ENCODE measurements at regions of chr2 and their contacts with region 1.

Region 1: GRCh38 chr2:25131567-25132298 is 36.6 kb downstream of the POMC start:
- DNase-seq: peak in 2 of 3 donors; percentile 34 to 39
- H3K4me3 ChIP-seq: peak overlapping the region in 6 of 7 experiments; percentile 28 to 72 (median 40)
- H3K27ac ChIP-seq: no peak overlapping the region
- H3K4me1 ChIP-seq: peaks cover 0 to 16% (median 13%) of the 10 kb centered on the region in 4 experiments
- H3K27me3 ChIP-seq: peaks cover 2 to 58% (median 25%) of the 10 kb centered on the region in 5 experiments

Region 2: GRCh38 chr2:24863641-24864040 is 268.1 kb before region 1 on chr2:
- CTCF ChIA-PET with region 1: no interaction called
- POLR2A ChIA-PET with region 1: no interaction called
- DNase-seq: no peak
- H3K4me3 ChIP-seq: no peak overlapping the region
- H3K27ac ChIP-seq: no peak overlapping the region
- H3K4me1 ChIP-seq: peaks cover 0 to 12% (median 2%) of the 10 kb centered on the region in 4 experiments
- H3K27me3 ChIP-seq: no peaks in the 10 kb centered on the region

Region 3: DNA sequence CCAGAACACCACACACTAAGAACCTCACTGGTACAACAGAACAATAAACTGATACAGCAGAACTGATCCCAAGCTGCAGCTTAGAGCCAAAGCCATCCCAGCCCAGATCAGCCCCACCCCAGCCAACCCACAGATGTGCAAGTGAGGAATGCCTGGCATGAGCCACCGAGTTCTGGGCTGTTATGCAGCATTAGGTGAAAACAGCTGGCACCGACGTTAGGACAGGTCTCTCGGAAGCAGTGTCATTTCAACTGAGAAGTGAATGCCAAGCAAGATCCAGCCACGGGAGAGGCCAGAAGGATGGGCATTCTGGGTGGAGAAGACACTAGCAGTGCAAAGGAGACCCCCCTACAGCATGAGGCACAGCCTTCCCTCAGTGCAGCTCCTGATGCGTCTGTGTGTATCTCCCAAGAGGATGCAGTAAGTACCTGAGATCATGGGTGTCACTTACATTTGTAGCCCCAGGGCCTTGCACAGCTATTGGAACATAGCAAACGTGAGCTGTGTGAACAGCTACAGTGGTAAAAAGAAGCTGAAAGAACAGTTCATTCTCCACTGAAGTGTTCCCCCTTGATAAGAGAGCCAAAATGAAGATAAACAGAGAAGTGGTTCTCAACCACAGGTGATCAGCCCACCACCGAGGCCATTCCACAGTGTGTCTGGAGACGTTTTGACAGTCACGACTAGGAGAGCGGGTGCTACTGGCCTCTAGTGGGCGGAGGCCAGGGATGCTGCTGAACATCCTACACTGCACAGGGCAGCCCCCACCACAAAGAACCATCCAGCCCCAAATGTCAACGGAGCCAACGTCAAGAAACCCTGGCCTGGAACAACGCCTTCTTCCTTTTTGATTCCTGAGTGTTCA is 250.3 kb before region 1 on chr2:
- CTCF ChIA-PET with region 1: no interaction called
- POLR2A ChIA-PET with region 1: no interaction called
- DNase-seq: no peak
- H3K4me3 ChIP-seq: no peak overlapping the region
- H3K27ac ChIP-seq: no peak overlapping the region
- H3K4me1 ChIP-seq: peaks cover 3 to 44% (median 38%) of the 10 kb centered on the region in 4 experiments
- H3K27me3 ChIP-seq: no peaks in the 10 kb centered on the region

Region 4: DNA sequence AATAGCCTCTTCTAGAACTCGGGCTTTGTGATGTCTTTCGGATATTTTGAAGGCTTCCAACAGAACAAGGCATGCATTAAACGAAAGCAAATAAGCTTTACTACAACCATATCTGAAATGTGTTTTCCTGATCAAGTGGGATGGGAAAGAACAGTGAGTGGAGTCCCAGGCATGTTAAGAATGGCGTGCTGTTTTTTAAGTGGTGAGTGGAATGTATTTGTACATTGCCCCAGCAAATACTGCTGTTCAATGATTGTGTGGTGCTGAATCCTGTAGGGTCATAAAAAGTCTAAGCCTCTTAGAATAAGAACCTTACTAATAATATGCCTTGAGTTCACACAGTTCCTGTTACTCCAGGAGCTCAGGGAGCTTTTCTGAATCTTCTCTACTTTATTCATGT is 15.8 kb before region 1 on chr2:
- CTCF ChIA-PET with region 1: interaction called, 13 read pairs
- POLR2A ChIA-PET with region 1: no interaction called
- DNase-seq: peak in 1 of 3 donors; percentile 26
- H3K4me3 ChIP-seq: no peak overlapping the region
- H3K27ac ChIP-seq: no peak overlapping the region
- H3K4me1 ChIP-seq: peaks cover 0 to 3% (median 0%) of the 10 kb centered on the region in 4 experiments
- H3K27me3 ChIP-seq: no peaks in the 10 kb centered on the region

Region 5: DNA sequence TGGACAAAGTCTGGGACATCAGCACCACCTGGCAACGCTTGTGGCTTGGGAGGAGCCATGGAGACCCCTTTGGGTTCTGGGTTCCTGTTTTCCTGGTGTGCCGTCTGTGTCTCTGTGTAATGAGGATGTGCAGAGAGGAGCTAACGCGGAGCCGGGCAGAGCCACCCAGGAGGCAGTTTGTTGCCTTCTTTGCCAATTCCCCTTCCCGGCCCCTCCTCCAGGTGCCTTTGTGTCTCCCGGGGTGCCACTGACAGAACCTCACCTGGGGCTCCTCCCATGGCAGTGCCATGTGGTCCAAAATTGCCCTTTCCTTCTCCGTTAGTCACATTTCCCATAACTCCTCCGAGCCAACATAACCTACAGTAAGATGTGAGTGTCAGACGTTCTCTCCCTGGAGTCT is 23.7 kb after region 1 on chr2:
- CTCF ChIA-PET with region 1: no interaction called
- POLR2A ChIA-PET with region 1: no interaction called
- DNase-seq: no peak
- H3K4me3 ChIP-seq: no peak overlapping the region
- H3K27ac ChIP-seq: no peak overlapping the region
- H3K4me1 ChIP-seq: peaks cover 0 to under 1% (median 0%) of the 10 kb centered on the region in 4 experiments
- H3K27me3 ChIP-seq: peaks cover 0 to 4% (median 0%) of the 10 kb centered on the region in 5 experiments

Region 6: DNA sequence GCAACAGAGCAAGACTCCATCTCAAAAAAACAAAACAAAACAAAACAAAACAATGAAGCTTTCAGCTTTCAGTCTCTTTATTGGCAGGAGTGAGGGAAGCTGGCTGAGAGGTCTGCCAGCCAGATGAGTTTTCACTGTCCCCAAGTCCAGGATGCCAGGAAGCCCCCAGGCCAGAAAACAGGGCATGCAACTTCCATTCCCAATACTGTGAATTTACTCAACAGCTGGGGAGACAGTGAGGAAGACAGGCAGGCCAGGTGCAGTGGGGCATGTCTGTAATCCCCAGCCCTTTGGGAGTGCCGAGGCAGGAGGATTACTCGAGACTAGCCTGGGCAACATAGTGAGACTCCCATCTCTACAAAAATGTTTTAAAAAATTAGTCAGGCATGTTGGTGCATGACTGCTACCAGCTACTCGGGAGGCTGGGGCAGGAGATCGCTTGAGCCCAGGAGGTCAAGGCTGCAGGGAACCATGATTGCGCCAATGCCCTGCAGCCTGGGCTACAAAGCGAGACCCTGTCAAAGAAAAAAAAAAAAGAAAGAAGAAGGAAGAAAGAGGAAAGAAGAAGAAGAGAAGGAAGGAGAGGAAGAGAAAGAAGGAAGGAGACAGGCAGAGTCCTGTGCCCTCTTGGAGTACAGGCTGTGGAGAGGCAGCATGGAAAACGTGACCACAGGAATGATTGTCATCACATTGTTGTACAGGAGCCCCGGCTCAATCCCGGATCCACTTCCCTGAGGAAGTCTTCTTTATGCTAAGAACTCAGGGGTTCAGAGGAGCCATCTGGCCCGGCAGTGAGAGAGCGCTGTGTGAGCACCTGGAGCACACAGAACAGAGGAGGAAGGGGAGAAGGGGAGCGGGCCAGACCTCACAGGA is 65.8 kb after region 1 on chr2:
- CTCF ChIA-PET with region 1: interaction called, 20 read pairs
- POLR2A ChIA-PET with region 1: no interaction called
- DNase-seq: no peak
- H3K4me3 ChIP-seq: no peak overlapping the region
- H3K27ac ChIP-seq: no peak overlapping the region
- H3K4me1 ChIP-seq: peaks cover 0 to 22% (median 17%) of the 10 kb centered on the region in 4 experiments
- H3K27me3 ChIP-seq: no peaks in the 10 kb centered on the region